K562 (cell line): ENCODE measurements at regions of chr18 and their contacts with region 1.

Region 1: DNA sequence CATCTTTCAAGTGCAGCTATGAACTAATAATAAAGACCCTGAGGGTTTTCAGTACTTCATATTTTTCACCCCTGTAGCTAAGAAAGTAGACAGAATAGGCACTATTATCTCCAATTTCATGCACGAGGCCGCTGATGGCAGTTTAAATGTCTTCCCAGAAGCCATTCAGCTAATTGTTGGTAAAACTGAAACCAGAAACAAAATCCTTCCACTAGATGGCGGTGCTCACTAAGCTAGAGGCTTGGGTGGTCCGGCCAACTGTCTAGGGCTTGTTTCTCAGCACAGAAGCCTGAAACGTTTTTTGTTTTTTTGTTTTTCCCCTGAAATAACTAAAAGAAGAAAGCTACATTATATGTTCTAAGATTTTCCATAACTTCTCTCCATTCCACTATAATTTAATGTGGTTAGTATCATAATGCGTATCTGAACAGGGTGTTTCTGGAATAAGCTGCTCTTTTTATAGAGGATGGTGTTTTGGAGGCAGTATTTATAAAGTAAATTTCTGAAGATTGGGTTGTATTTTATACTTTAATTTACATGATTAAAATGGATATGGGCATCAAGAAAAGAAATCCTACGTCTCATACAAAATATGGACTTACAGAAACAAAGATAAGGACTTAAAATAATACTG is 159.4 kb downstream of the PIK3C3 start:
- DNase-seq: peak; percentile 23 to 65 (median 29)
- ATAC-seq: peak; percentile 96
- H3K4me3 ChIP-seq: no peak overlapping the region
- H3K27ac ChIP-seq: no peak overlapping the region
- H3K4me1 ChIP-seq: 0 out of 5 replicates have a peak, but pooled peaks cover 0 to 3% of the 10 kb centered on the region in 2 experiments
- H3K27me3 ChIP-seq: no peaks in the 10 kb centered on the region
- CTCF ChIP-seq: peak; percentile 61 to 78 (median 67)
- EP300 ChIP-seq: no peak
- POLR2A ChIP-seq: no peak
- RAD21 ChIP-seq: peak; percentile 73 to 82

Region 2: DNA sequence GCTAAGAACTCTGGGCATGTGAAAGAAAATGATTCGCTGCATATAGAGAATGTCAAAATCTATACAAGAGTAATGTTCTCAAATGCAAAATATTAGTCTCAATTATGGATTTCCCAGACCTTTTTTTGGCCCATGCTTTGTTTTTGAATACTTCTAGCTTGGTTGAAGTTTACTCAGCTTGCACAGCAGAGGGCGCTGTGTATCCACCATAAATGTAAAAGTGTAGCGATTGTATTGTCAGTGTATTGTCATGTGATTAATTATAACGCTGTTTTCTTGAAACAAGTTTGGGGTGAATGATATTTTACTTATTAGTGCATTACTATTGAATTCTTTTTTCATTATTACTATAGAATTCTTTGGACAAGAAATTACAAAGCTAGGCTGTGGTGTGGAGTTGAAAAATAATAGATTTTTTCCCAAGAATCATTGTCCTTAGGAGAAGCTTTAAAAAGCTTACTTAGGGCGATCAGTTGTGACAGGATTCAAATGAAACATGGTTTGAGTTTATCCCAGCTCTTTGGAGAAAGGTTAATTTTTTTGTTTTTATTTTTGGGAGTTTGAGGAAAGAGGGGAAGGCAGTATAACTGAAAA is 61.1 kb before region 1 on chr18:
- CTCF ChIA-PET with region 1: no interaction called
- POLR2A ChIA-PET with region 1: no interaction called
- in situ Hi-C with region 1: no loop called
- intact Hi-C with region 1: loop called (anchors 2 kb)
- DNase-seq: peak; percentile 20 to 61 (median 26)
- ATAC-seq: peak; percentile 80
- H3K4me3 ChIP-seq: no peak overlapping the region
- H3K27ac ChIP-seq: no peak overlapping the region
- H3K4me1 ChIP-seq: no peaks in the 10 kb centered on the region
- H3K27me3 ChIP-seq: no peaks in the 10 kb centered on the region
- CTCF ChIP-seq: peak; percentile 46 to 61 (median 57); a peak in 5 of 6 replicates
- EP300 ChIP-seq: no peak
- POLR2A ChIP-seq: no peak
- RAD21 ChIP-seq: peak; percentile 51 to 57

Region 3: DNA sequence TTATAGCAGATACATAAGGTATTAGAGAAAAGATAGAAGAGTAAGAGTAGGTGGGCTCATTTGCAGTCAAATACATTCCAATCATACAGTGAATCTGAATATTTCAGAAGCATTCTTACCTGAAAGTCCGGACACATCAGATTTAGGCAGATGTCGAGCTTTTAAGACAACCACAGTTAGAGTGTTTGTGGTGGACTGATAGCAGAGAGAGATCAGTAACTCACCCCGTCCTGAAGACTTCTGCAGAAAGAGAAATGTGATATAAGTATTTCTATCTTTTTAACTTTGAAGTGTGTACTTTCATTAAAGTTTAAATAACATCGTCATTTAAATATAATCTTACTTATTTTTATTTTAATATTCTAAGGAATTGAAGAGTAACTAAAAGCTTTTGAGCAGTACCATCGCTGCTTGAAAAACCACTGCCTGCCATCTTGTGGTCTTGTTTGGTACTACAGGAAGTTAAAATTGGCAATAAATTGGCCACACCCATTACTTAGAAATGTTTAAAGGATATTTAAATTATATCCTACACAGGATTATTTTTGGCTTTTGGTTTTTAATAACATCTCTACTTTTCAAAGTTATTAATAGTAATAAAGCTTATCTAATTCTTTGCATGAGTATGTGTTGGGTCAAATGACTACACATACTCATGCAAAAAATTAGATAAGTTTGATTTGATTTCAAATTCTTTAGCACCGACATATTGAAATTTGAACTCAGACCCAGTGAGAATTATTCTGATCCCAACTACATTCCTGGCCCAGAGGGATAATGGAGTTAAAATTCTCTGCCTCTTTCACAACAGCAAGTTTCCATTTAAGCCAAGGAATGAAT is 1157.4 kb after region 1 on chr18:
- CTCF ChIA-PET with region 1: interaction called, 6 read pairs
- POLR2A ChIA-PET with region 1: no interaction called
- in situ Hi-C with region 1: no loop called
- intact Hi-C with region 1: loop called (anchors 1 kb)
- DNase-seq: peak; percentile 4 to 34 (median 23)
- ATAC-seq: no peak
- H3K4me3 ChIP-seq: no peak overlapping the region
- H3K27ac ChIP-seq: no peak overlapping the region
- H3K4me1 ChIP-seq: no peaks in the 10 kb centered on the region
- H3K27me3 ChIP-seq: no peaks in the 10 kb centered on the region
- CTCF ChIP-seq: peak; percentile 21 to 58 (median 29); a peak in 2 of 6 replicates
- EP300 ChIP-seq: no peak
- POLR2A ChIP-seq: no peak
- RAD21 ChIP-seq: peak; percentile 51 to 52; a peak in 3 of 4 replicates

Region 4: GRCh38 chr18:43571078-43571689 is 1456.8 kb after region 1 on chr18:
- CTCF ChIA-PET with region 1: no interaction called
- POLR2A ChIA-PET with region 1: no interaction called
- in situ Hi-C with region 1: loop called (anchors 25 kb)
- intact Hi-C with region 1: no loop called
- DNase-seq: peak; percentile 8 to 17 (median 12)
- ATAC-seq: no peak
- H3K4me3 ChIP-seq: no peak overlapping the region
- H3K27ac ChIP-seq: no peak overlapping the region
- H3K4me1 ChIP-seq: no peaks in the 10 kb centered on the region
- H3K27me3 ChIP-seq: no peaks in the 10 kb centered on the region
- CTCF ChIP-seq: peak in 2 of 3 experiments; percentile 37 to 39; a peak in 2 of 6 replicates
- EP300 ChIP-seq: no peak
- POLR2A ChIP-seq: no peak
- RAD21 ChIP-seq: peak in 1 of 2 experiments; percentile 35; a peak in 2 of 4 replicates

Region 5: GRCh38 chr18:43587538-43588153 is 1473.2 kb after region 1 on chr18:
- CTCF ChIA-PET with region 1: no interaction called
- POLR2A ChIA-PET with region 1: no interaction called
- in situ Hi-C with region 1: no loop called
- intact Hi-C with region 1: loop called (anchors 1 kb)
- DNase-seq: peak; percentile 3 to 14 (median 11)
- ATAC-seq: no peak
- H3K4me3 ChIP-seq: no peak overlapping the region
- H3K27ac ChIP-seq: no peak overlapping the region
- H3K4me1 ChIP-seq: no peaks in the 10 kb centered on the region
- H3K27me3 ChIP-seq: no peaks in the 10 kb centered on the region
- CTCF ChIP-seq: peak; percentile 17 to 43 (median 32); a peak in 4 of 6 replicates
- EP300 ChIP-seq: no peak
- POLR2A ChIP-seq: no peak
- RAD21 ChIP-seq: peak in 1 of 2 experiments; percentile 44; a peak in 2 of 4 replicates